A673 (cell line): ENCODE measurements at regions of chr17 and their contacts with region 1.

Region 1: GRCh38 chr17:69567130-69567529 is 152.6 kb downstream of the MAP2K6 start:
- DNase-seq: no peak
- H3K4me3 ChIP-seq: no peak overlapping the region
- H3K27ac ChIP-seq: no peak overlapping the region
- H3K4me1 ChIP-seq: no peaks in the 10 kb centered on the region
- H3K27me3 ChIP-seq: no peaks in the 10 kb centered on the region
- CTCF ChIP-seq: no peak

Region 2: DNA sequence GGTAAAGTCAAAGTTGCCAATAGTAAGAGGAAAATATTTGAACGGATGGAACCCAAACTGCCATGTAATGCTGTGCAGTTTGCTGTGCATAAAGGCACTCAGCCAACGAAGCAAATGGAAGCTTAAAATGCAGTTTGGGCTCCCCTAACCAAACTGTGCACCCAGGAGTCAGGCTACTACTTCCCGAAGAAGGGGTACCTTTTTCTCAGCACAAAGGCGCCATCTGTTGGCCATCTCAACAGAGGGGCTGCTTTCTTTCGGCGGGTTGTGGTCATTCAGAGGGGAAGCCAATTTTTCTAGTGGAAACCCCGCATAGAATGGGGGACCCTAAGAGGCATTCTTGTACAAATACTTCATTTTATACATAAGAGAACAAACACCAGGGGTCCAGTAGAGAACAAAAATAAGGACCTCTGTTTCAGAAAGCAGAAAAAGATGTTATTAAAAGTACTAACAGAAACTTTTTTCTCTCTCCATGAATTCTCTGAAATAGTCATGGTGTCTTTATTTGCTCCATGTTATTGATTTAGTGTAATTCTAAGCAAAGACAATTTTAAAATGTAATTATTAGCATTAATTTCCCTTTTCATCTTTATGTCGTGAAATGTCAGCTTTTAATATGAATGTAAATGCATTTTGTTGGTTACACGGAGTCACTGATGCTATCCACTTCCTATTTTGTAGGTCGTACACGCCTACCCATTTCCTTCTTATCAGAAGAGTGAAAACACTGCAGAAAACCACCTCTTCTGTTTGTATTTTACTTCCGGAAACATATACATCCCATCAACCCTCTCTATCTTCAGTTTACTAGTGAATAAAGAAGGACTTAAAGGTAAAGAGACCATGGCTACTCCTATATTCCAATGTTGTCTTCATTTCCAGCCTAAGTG is 1055.5 kb after region 1 on chr17:
- CTCF ChIA-PET with region 1: no interaction called
- POLR2A ChIA-PET with region 1: no interaction called
- intact Hi-C with region 1: loop called (anchors 5 kb)
- DNase-seq: peak; percentile 62
- H3K4me3 ChIP-seq: no peak overlapping the region
- H3K27ac ChIP-seq: no peak overlapping the region
- H3K4me1 ChIP-seq: no peaks in the 10 kb centered on the region
- H3K27me3 ChIP-seq: no peaks in the 10 kb centered on the region
- CTCF ChIP-seq: peak; percentile 78